AG04449 (cell line): ENCODE measurements at regions of chr22 and their contacts with region 1.

Region 1: GRCh38 chr22:22508274-22509176 is at the start of gene ZNF280B:
- DNase-seq: peak; percentile 9
- H3K4me3 ChIP-seq: peak within 1 kb of the TSS; percentile 85
- CTCF ChIP-seq: peak; percentile 93

Region 2: GRCh38 chr22:22498267-22498666 is 10.3 kb before region 1 on chr22:
- CTCF ChIA-PET with region 1: interaction called, 12 read pairs
- POLR2A ChIA-PET with region 1: no interaction called
- DNase-seq: no peak
- H3K4me3 ChIP-seq: no peak overlapping the region
- CTCF ChIP-seq: no peak

Region 3: DNA sequence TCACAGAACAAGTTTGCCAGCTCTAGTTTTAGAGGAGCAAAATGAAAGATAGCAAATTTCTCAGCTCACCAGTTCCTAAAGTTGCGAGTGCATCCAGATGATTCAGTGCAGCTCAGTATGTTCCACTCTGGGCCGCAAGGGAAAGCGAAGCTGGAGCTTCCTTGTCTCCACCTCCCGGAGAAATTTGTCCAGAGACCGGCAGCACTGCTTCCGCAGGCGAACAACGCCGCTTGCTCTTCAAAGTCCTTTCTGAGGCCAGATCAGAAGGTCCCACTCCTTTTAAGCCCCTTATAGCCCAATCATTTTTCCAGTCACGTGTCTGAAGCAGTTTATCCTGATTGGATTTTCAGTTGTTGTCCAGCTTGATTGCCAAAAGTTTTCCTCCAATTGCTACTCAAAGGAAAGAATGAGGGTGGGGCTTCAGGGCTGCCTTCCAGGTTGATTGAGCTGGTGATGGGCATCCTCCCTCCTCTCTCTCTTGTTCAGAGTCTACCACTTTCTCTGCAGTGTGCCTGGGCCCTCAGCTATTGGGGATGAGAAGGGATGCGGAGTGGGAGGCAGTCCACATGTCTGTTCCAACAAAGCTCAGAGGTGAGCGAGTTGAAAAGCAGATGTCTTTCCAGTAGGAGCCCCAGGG is 11.6 kb after region 1 on chr22 and contains the start of gene ZNF280A:
- CTCF ChIA-PET with region 1: interaction called, 20 read pairs
- POLR2A ChIA-PET with region 1: no interaction called
- DNase-seq: no peak
- H3K4me3 ChIP-seq: no peak within 1 kb of the TSS
- CTCF ChIP-seq: no peak